Psoas muscle (tissue), 8 donors: ENCODE measurements at regions of chr15 and their contacts with region 1.

Region 1: GRCh38 chr15:43056696-43057095 is 49.1 kb downstream of the UBR1 start:
- DNase-seq: no peak
- ATAC-seq: no peak
- H3K4me3 ChIP-seq: no peak overlapping the region
- H3K27ac ChIP-seq: no peak overlapping the region
- H3K4me1 ChIP-seq: no peaks in the 10 kb centered on the region
- H3K27me3 ChIP-seq: no peaks in the 10 kb centered on the region
- CTCF ChIP-seq: no peak

Region 2: GRCh38 chr15:42984493-42985034 is 72.1 kb before region 1 on chr15:
- intact Hi-C with region 1: loop called in 1 of 2 experiments (anchors 5 kb)
- DNase-seq: no peak
- ATAC-seq: no peak
- H3K4me3 ChIP-seq: no peak overlapping the region
- H3K27ac ChIP-seq: no peak overlapping the region
- H3K4me1 ChIP-seq: no peaks in the 10 kb centered on the region
- H3K27me3 ChIP-seq: no peaks in the 10 kb centered on the region
- CTCF ChIP-seq: no peak

Region 3: DNA sequence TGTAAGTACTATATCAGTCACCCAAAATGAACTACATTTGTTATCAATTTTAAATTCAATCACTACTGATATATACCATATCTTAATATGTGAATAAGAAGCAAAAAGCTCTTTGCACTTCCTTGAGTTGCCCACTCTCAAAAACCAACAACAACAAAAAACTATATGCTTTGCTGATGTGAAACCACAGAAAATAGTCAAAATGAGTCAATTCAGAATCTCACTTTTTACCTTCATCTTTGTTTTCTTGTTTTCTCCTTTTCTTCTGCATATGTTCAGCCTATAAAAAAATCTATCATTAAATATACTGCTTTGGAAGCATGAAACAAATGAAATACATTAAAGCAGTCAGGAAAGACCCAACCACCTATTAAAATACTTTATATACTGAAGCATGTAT is 31.5 kb before region 1 on chr15:
- intact Hi-C with region 1: no loop called
- DNase-seq: no peak
- ATAC-seq: no peak
- H3K4me3 ChIP-seq: no peak overlapping the region
- H3K27ac ChIP-seq: no peak overlapping the region
- H3K4me1 ChIP-seq: no peaks in the 10 kb centered on the region
- H3K27me3 ChIP-seq: no peaks in the 10 kb centered on the region
- CTCF ChIP-seq: no peak